H1 (cell line): ENCODE measurements at regions of chr7 and their contacts with region 1.

Region 1: DNA sequence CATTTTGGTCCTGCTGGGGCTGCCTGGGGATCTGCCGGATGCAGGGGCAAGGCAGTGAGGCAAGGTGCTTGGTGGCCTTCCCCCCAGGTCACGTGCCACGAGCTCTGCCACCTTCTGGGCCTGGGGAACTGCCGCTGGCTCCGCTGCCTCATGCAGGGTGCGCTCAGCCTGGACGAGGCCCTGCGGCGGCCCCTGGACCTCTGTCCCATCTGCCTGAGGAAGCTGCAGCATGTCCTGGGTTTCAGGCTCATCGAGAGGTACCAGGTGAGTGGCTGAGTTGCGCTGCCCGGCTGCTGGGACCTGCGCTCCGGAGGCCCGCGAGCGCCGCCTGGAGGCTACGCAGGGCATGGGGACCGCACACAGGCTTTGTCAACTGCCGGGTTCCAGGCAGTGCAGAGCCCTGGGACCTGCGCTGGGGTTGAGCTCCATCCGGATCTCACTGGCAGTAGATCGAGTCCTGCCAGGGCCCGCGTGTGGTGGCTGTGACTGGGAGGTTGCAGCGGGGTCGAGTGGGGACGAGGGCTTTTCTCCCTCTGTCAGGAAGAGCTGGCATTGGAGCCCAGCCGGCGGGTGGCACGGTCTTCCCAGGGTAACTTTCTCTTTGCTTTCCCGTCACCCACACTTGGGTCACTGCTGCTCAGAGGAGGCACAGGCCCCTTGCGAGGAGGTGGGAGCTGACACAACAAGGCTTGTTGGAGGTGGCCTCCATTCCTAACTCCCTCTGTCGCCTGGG is 21.7 kb downstream of the AMZ1 start:
- DNase-seq: peak; percentile 90 to 93
- H3K4me3 ChIP-seq: no peak overlapping the region
- H3K27ac ChIP-seq: no peak overlapping the region
- H3K4me1 ChIP-seq: peaks cover 0 to 5% (median under 1%) of the 10 kb centered on the region in 4 experiments; a peak in 2 of 7 replicates
- H3K27me3 ChIP-seq: no peaks in the 10 kb centered on the region
- CTCF ChIP-seq: peak in 2 of 3 experiments; percentile 97 to 99; a peak in 3 of 4 replicates
- EP300 ChIP-seq: no peak
- POLR2A ChIP-seq: no peak
- RAD21 ChIP-seq: peak; percentile 88 to 92

Region 2: GRCh38 chr7:2628130-2628482 is 81.6 kb before region 1 on chr7:
- CTCF ChIA-PET with region 1: no interaction called
- POLR2A ChIA-PET with region 1: no interaction called
- DNase-seq: no peak
- H3K4me3 ChIP-seq: no peak overlapping the region
- H3K27ac ChIP-seq: no peak overlapping the region
- H3K4me1 ChIP-seq: peaks cover 0 to 11% (median 5%) of the 10 kb centered on the region in 4 experiments; a peak in 5 of 7 replicates
- H3K27me3 ChIP-seq: no peaks in the 10 kb centered on the region
- CTCF ChIP-seq: no peak
- EP300 ChIP-seq: no peak
- POLR2A ChIP-seq: no peak
- RAD21 ChIP-seq: no peak

Region 3: DNA sequence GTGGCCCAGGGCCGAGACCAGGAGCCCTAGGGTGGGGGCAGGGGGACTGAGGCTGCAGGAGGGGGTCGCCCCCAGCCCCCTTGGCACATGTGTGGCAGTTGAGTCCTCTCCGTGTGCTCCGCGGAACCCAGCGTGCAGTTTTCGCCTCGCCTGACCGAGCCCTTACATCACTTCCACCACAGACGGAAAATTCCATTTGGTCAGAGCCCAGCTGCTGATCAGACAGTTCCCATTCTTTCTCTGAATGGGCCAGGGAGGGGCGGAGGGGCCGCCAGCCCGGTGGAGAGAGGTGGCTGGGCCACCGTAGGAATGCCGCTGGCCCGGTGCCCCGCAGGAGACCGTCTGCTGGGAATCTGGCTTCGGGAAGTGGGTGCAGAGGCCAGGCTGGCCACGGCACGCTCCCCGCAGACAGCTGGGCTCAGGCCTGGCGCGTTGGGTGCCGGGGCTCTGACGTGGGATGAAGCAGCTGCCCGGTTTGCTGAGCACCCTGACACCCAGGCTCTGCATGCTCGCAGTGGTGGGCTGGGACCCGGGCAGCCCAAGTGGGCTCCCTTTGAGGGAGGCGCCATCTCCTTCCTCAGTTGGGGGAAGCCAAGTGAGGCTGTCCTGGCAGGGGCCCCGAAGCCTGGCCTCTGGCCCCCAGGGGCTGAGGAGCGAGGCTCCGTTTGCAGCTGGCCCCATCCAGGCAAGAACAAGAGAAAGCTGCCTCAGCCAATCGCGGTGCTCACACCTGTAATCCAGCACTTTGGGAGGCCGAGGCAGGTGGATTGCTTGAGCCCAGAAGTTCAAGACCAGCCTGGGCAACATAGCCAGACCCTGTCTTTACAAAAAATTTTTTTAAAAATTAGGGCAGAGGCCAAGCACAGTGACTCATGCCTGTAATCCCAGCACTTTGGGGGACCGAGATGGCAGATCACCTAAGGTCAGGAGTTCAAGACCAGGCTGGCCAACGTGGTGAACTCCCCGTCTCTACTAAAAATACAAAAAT is 68.0 kb before region 1 on chr7:
- CTCF ChIA-PET with region 1: interaction called, 10 read pairs
- POLR2A ChIA-PET with region 1: no interaction called
- DNase-seq: peak in 1 of 2 experiments; percentile 87
- H3K4me3 ChIP-seq: peak overlapping the region in 2 of 4 experiments; percentile 19 to 41; a peak in 4 of 8 replicates
- H3K27ac ChIP-seq: peak overlapping the region; percentile 68; the same call in 1 of the 2 replicates
- H3K4me1 ChIP-seq: peaks cover 3 to 46% (median 39%) of the 10 kb centered on the region in 4 experiments
- H3K27me3 ChIP-seq: no peaks in the 10 kb centered on the region
- CTCF ChIP-seq: peak in 1 of 3 experiments; percentile 9; a peak in 1 of 4 replicates
- EP300 ChIP-seq: peak in 1 of 2 experiments; percentile 63; a peak in 1 of 3 replicates
- POLR2A ChIP-seq: no peak; a peak in 1 of 3 replicates
- RAD21 ChIP-seq: no peak

Region 4: DNA sequence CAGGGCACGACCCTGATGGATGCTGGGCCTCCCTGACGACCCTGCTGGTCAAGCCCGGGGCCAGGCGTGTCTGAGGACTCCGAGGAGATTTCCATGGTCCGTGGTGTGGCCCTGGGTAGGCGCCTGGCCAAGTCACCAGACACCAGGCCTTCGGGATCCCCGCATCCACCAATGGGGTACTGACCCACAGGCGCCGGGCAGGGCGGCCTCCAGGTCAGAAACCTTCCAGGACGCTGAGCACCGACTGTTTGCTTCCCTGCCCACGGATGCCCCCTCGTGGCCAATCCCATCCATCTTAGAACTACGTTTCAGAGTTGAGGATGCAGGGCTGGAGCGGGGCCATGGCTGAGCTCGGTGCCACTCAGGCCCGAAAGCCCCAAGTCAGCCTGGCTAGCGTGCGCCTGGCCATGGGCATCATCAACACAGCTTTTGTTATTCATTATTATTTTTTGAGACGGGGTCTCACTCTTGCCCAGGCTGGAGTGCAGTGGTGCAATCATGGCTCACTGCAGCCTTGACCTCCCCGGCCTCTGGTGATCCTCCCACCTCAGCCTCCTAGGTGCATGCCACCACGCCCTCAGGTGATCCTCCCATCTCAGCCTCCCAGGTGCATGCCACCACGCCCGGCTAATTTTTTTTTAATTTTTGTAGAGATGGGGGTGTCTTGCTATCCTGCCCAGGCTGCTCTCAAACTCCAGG is 28.8 kb before region 1 on chr7:
- CTCF ChIA-PET with region 1: interaction called, 46 read pairs
- POLR2A ChIA-PET with region 1: no interaction called
- DNase-seq: peak; percentile 46 to 95
- H3K4me3 ChIP-seq: no peak overlapping the region
- H3K27ac ChIP-seq: no peak overlapping the region
- H3K4me1 ChIP-seq: no peaks in the 10 kb centered on the region
- H3K27me3 ChIP-seq: no peaks in the 10 kb centered on the region; a peak in 1 of 7 replicates
- CTCF ChIP-seq: peak; percentile 85 to 89 (median 86)
- EP300 ChIP-seq: no peak
- POLR2A ChIP-seq: no peak
- RAD21 ChIP-seq: peak; percentile 84 to 88

Region 5: GRCh38 chr7:2698581-2699288 is 11.0 kb before region 1 on chr7:
- CTCF ChIA-PET with region 1: interaction called, 92 read pairs
- POLR2A ChIA-PET with region 1: interaction called, 5 read pairs
- DNase-seq: no peak
- H3K4me3 ChIP-seq: no peak overlapping the region
- H3K27ac ChIP-seq: no peak overlapping the region
- H3K4me1 ChIP-seq: no peaks in the 10 kb centered on the region; a peak in 2 of 7 replicates
- H3K27me3 ChIP-seq: no peaks in the 10 kb centered on the region
- CTCF ChIP-seq: no peak
- EP300 ChIP-seq: no peak
- POLR2A ChIP-seq: no peak
- RAD21 ChIP-seq: no peak

Region 6: DNA sequence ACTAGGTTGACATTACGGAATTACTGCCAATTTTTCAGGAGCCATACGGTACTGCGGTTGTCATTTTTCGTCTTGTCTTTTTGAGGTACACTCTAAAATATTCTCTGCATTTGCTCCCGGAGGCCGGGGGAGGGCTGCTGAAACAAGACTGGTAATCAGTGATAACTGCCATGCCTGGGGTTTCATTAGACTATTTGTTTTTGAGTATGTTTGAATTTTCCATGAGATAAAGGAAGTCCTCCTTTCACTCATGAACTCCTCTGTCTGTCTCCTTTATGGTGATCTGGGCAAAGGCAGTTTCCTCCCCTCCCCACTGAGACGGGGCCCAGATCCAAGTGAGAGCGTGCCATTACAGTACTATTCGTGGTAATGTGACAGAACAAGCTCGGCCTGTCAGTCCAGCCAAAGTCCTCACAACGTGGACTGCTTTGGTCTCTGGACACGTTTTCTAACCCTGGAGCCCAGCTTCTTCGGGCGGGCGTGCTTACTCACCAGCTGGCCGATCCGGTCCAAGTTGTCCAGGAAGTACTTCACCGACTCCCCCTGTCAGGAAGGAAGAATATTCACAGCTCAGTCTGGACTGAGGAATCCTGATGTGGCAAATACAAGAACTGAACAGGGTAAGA is 23.4 kb after region 1 on chr7:
- CTCF ChIA-PET with region 1: interaction called, 13 read pairs
- POLR2A ChIA-PET with region 1: interaction called, 5 read pairs
- DNase-seq: peak in 1 of 2 experiments; percentile 33
- H3K4me3 ChIP-seq: no peak overlapping the region
- H3K27ac ChIP-seq: no peak overlapping the region
- H3K4me1 ChIP-seq: peaks cover 0 to 12% (median 6%) of the 10 kb centered on the region in 4 experiments; a peak in 4 of 7 replicates
- H3K27me3 ChIP-seq: no peaks in the 10 kb centered on the region
- CTCF ChIP-seq: no peak
- EP300 ChIP-seq: no peak
- POLR2A ChIP-seq: no peak
- RAD21 ChIP-seq: no peak